ENCODE measurements at regions of chr7 and their contacts with region 1.

Region 1: DNA sequence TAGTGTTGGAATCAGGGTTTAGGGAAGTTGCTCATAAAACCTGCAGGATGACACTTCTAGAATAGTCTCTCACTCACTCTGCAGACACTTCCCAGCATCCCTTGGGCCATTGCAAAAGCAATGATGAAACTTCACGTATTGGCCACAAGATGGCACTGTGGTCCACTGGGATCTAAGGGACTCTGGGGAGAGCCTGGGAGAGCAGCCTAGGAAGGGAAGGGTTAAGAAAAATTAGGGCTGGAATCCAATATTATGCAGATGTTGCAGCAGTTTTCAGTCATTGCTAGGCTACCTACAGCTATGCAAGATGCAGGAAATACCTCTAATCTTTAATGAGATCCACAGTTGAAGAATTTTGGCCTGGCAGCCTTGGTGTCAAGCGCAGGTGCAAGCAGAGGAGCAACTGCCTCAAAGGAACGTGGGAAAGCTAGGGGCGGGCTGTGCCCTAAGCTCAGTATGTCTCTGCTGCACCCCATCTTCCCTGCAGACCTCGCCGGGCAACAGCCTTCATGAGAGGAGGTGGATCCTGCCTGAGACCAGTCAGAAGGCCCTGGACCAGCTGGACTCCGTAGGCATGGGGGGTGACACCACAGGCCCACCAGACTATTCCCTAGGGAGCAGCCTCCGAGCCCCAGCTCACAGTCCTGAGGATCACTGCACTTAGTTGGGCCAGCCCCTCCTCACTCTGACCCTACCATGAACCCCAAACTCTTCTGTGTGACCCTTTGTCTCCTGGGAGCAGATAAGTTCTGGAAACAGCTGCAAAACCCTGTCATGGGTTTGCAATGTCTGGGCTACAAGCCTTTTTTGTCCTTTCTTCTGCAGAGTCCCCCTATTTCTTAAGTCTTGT is 127.9 kb upstream of the PRSS58 start:
- DNase-seq: peak in 1 of 2 experiments; percentile 68
- H3K4me3 ChIP-seq: no peak overlapping the region
- H3K27ac ChIP-seq: no peak overlapping the region
- H3K4me1 ChIP-seq: no peaks in the 10 kb centered on the region; a peak in 1 of 7 replicates
- H3K27me3 ChIP-seq: no peaks in the 10 kb centered on the region
- CTCF ChIP-seq: peak; percentile 74 to 88 (median 88)
- EP300 ChIP-seq: peak in 1 of 2 experiments; percentile 20; a peak in 1 of 3 replicates
- POLR2A ChIP-seq: no peak
- RAD21 ChIP-seq: peak; percentile 52 to 65; a peak in 3 of 4 replicates

Region 2: DNA sequence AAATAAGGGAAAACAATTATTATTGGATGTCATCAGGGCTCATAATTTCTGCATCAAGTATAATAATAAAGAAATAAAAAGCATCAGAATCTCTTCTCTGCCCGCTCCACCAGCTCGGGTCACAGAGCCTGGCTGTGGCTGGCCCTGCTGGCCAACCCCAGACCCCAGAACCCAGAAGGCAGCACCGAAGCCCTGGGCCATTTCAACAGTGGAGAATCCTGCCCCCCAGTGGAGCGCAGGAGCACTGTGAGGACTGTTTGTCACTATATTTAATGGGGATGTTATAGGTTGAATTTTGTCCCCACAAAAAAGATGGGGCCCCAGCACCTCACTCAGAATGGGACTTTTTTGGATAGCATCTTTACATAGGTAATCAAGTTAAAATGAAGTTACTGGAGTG is 711.0 kb before region 1 on chr7:
- CTCF ChIA-PET with region 1: no interaction called
- POLR2A ChIA-PET with region 1: no interaction called
- DNase-seq: peak; percentile 39 to 71
- H3K4me3 ChIP-seq: no peak overlapping the region
- H3K27ac ChIP-seq: no peak overlapping the region
- H3K4me1 ChIP-seq: no peaks in the 10 kb centered on the region; a peak in 1 of 7 replicates
- H3K27me3 ChIP-seq: no peaks in the 10 kb centered on the region
- CTCF ChIP-seq: peak; percentile 74 to 82 (median 76)
- EP300 ChIP-seq: no peak
- POLR2A ChIP-seq: no peak
- RAD21 ChIP-seq: peak; percentile 75 to 77

Region 3: GRCh38 chr7:142248166-142249160 is 137.3 kb before region 1 on chr7:
- CTCF ChIA-PET with region 1: no interaction called
- POLR2A ChIA-PET with region 1: no interaction called
- DNase-seq: peak in 1 of 2 experiments; percentile 51
- H3K4me3 ChIP-seq: no peak overlapping the region
- H3K27ac ChIP-seq: no peak overlapping the region
- H3K4me1 ChIP-seq: peaks cover 0 to 5% (median 2%) of the 10 kb centered on the region in 4 experiments; a peak in 2 of 7 replicates
- H3K27me3 ChIP-seq: no peaks in the 10 kb centered on the region
- CTCF ChIP-seq: peak in 1 of 3 experiments; percentile 30; a peak in 2 of 4 replicates
- EP300 ChIP-seq: no peak
- POLR2A ChIP-seq: no peak
- RAD21 ChIP-seq: peak in 1 of 2 experiments; percentile 34; a peak in 1 of 4 replicates

Region 4: GRCh38 chr7:142323706-142324105 is 62.0 kb before region 1 on chr7:
- CTCF ChIA-PET with region 1: interaction called, 19 read pairs
- POLR2A ChIA-PET with region 1: no interaction called
- DNase-seq: peak; percentile 50 to 90
- H3K4me3 ChIP-seq: no peak overlapping the region
- H3K27ac ChIP-seq: no peak overlapping the region
- H3K4me1 ChIP-seq: peaks cover 0 to 6% (median 1%) of the 10 kb centered on the region in 4 experiments; a peak in 4 of 7 replicates
- H3K27me3 ChIP-seq: no peaks in the 10 kb centered on the region
- CTCF ChIP-seq: peak; percentile 81 to 92 (median 87)
- EP300 ChIP-seq: 0 out of 3 replicates have a peak, but pooled peaks of 1 of the 2 experiments have one; percentile 24
- POLR2A ChIP-seq: no peak
- RAD21 ChIP-seq: peak; percentile 81 to 88

Region 5: DNA sequence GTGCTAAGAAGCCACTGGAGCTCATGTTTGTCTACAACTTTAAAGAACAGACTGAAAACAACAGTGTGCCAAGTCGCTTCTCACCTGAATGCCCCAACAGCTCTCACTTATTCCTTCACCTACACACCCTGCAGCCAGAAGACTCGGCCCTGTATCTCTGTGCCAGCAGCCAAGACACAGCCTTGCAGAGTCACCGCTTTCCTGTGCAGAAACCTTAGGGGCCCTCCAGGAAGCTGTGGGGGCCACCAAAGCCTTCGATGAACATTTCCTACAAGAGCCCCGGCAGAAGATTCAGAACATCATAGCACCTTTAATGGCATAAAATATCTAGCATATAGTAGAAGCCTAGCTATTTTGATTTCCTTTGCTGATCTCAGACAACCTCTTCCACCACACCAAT is 39.9 kb before region 1 on chr7:
- CTCF ChIA-PET with region 1: interaction called, 337 read pairs
- POLR2A ChIA-PET with region 1: no interaction called
- DNase-seq: no peak
- H3K4me3 ChIP-seq: no peak overlapping the region
- H3K27ac ChIP-seq: no peak overlapping the region
- H3K4me1 ChIP-seq: no peaks in the 10 kb centered on the region
- H3K27me3 ChIP-seq: no peaks in the 10 kb centered on the region
- CTCF ChIP-seq: no peak
- EP300 ChIP-seq: no peak
- POLR2A ChIP-seq: no peak
- RAD21 ChIP-seq: no peak

Region 6: GRCh38 chr7:142400042-142400533 is 14.4 kb after region 1 on chr7:
- CTCF ChIA-PET with region 1: interaction called, 59 read pairs
- POLR2A ChIA-PET with region 1: no interaction called
- DNase-seq: no peak
- H3K4me3 ChIP-seq: no peak overlapping the region
- H3K27ac ChIP-seq: no peak overlapping the region
- H3K4me1 ChIP-seq: no peaks in the 10 kb centered on the region
- H3K27me3 ChIP-seq: no peaks in the 10 kb centered on the region
- CTCF ChIP-seq: no peak
- EP300 ChIP-seq: no peak
- POLR2A ChIP-seq: no peak
- RAD21 ChIP-seq: no peak

Region 7: GRCh38 chr7:142412551-142413193 is 27.0 kb after region 1 on chr7:
- CTCF ChIA-PET with region 1: interaction called, 32 read pairs
- POLR2A ChIA-PET with region 1: no interaction called
- DNase-seq: peak; percentile 36 to 55
- H3K4me3 ChIP-seq: no peak overlapping the region
- H3K27ac ChIP-seq: no peak overlapping the region
- H3K4me1 ChIP-seq: peaks cover 0 to 3% (median 0%) of the 10 kb centered on the region in 4 experiments; a peak in 2 of 7 replicates
- H3K27me3 ChIP-seq: no peaks in the 10 kb centered on the region
- CTCF ChIP-seq: peak; percentile 78 to 96 (median 84)
- EP300 ChIP-seq: no peak
- POLR2A ChIP-seq: no peak
- RAD21 ChIP-seq: peak; percentile 56 to 70

Region 8: GRCh38 chr7:142459551-142459963 is 73.8 kb after region 1 on chr7:
- CTCF ChIA-PET with region 1: interaction called, 33 read pairs
- POLR2A ChIA-PET with region 1: no interaction called
- DNase-seq: peak in 1 of 2 experiments; percentile 53
- H3K4me3 ChIP-seq: no peak overlapping the region
- H3K27ac ChIP-seq: no peak overlapping the region
- H3K4me1 ChIP-seq: no peaks in the 10 kb centered on the region
- H3K27me3 ChIP-seq: no peaks in the 10 kb centered on the region
- CTCF ChIP-seq: peak; percentile 33 to 82 (median 81)
- EP300 ChIP-seq: no peak
- POLR2A ChIP-seq: no peak
- RAD21 ChIP-seq: peak; percentile 65 to 74

Region 9: GRCh38 chr7:142496545-142497041 is 110.9 kb after region 1 on chr7:
- CTCF ChIA-PET with region 1: interaction called, 26 read pairs
- POLR2A ChIA-PET with region 1: no interaction called
- DNase-seq: no peak
- H3K4me3 ChIP-seq: no peak overlapping the region
- H3K27ac ChIP-seq: no peak overlapping the region
- H3K4me1 ChIP-seq: no peaks in the 10 kb centered on the region
- H3K27me3 ChIP-seq: no peaks in the 10 kb centered on the region
- CTCF ChIP-seq: peak; percentile 58 to 83 (median 78)
- EP300 ChIP-seq: no peak
- POLR2A ChIP-seq: no peak
- RAD21 ChIP-seq: peak; percentile 37 to 61

Region 10: GRCh38 chr7:142685877-142686508 is 300.3 kb after region 1 on chr7:
- CTCF ChIA-PET with region 1: no interaction called
- POLR2A ChIA-PET with region 1: no interaction called
- DNase-seq: no peak
- H3K4me3 ChIP-seq: no peak overlapping the region
- H3K27ac ChIP-seq: no peak overlapping the region
- H3K4me1 ChIP-seq: no peaks in the 10 kb centered on the region
- H3K27me3 ChIP-seq: no peaks in the 10 kb centered on the region
- CTCF ChIP-seq: no peak
- EP300 ChIP-seq: no peak
- POLR2A ChIP-seq: no peak
- RAD21 ChIP-seq: no peak